AG04449 (cell line): ENCODE measurements at regions of chr1 and their contacts with region 1.

Region 1: DNA sequence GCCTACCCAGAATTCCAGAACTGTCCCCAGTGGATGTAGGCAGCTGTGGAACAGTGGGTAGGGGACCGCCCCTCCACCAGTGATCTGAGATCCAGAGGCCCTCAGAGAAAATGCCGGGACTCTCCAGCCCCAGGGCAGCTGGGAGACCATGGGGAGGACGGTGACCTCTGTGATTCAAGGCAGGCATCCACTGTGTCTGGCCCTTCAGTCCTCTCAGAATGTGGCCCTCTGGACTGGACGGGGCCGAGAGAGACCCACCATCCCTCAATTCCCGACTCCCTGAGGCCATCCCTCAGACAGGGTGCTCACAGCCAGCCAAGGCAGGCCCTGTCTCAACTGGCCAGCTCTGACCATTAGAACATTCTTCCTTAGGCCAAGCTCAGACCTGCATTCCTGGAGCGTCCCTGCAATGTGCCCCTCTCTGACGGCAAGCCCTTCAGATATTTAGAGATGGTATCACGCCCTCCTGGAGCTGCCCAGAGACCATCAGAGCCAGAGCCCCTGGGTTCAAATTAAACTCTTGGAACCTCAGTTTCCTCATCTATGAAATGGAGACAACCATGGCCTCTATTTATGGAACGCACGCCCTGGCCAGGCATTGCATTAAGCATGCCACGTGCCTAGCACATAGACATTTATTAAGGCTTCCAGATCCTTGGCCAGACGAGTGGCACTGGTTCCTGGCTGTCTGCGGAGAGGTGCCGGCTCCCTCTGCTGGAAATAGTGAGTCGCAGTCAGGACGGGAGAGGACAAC is 9.6 kb upstream of the EPS8L3 start:
- DNase-seq: peak; percentile 40
- H3K4me3 ChIP-seq: no peak overlapping the region
- CTCF ChIP-seq: peak; percentile 96

Region 2: GRCh38 chr1:109570417-109570827 is 202.9 kb before region 1 on chr1:
- CTCF ChIA-PET with region 1: no interaction called
- POLR2A ChIA-PET with region 1: no interaction called
- DNase-seq: no peak
- H3K4me3 ChIP-seq: no peak overlapping the region
- CTCF ChIP-seq: no peak

Region 3: DNA sequence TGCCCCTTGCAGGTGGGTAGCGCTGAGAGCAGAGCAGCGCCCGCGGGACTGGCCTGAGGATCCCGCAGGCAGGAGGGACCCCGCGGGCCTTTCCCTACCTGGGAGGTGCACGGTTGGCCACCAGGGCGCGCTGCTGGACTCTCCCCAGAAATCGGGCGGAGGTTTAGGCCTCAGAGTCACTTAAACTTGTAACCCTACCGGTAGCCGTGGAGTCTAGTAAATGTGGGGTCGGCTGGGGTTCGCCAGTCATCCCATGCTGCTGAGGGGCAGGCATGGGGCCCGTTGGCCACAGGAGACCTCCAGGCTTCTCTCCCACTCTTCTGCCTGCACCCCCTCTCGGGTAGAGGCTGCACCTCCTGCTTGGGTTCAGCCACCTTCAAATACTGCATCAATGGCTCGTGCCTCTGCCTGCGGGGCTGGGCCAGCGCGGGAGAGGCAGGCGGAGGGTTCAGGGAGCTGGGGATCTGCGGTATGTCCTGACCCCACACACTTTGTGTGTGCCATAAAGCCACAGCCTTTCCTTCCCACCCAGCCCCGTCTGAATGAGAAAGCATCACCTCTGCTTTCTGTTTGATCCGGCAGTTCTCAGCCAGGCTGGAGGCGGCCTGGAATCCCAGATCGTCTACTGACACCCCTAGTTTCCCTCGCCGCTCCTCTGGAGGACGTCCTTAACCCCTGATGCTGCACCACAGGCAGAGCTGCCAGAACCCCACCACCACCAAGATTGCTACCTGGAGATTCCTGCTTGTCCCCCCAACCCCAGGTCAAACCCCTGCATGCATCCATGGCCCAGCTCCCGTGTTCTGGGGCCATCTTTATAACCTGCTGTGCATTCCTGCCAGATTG is 129.7 kb before region 1 on chr1:
- CTCF ChIA-PET with region 1: interaction called, 830 read pairs
- POLR2A ChIA-PET with region 1: interaction called, 3 read pairs
- DNase-seq: no peak
- H3K4me3 ChIP-seq: no peak overlapping the region
- CTCF ChIP-seq: peak; percentile 94

Region 4: GRCh38 chr1:109790735-109791494 is 17.6 kb after region 1 on chr1:
- CTCF ChIA-PET with region 1: interaction called, 40 read pairs
- POLR2A ChIA-PET with region 1: no interaction called
- DNase-seq: no peak
- H3K4me3 ChIP-seq: no peak overlapping the region
- CTCF ChIP-seq: peak; percentile 40

Region 5: GRCh38 chr1:109827466-109827865 is 54.1 kb after region 1 on chr1:
- CTCF ChIA-PET with region 1: no interaction called
- POLR2A ChIA-PET with region 1: no interaction called
- DNase-seq: no peak
- H3K4me3 ChIP-seq: no peak overlapping the region
- CTCF ChIP-seq: no peak

Region 6: GRCh38 chr1:109959974-109960744 is 186.8 kb after region 1 on chr1:
- CTCF ChIA-PET with region 1: interaction called, 18 read pairs
- POLR2A ChIA-PET with region 1: no interaction called
- DNase-seq: peak; percentile 46
- H3K4me3 ChIP-seq: no peak overlapping the region
- CTCF ChIP-seq: no peak

Region 7: GRCh38 chr1:110019770-110020169 is 246.4 kb after region 1 on chr1:
- CTCF ChIA-PET with region 1: interaction called, 71 read pairs
- POLR2A ChIA-PET with region 1: no interaction called
- DNase-seq: no peak
- H3K4me3 ChIP-seq: no peak overlapping the region
- CTCF ChIP-seq: no peak